Astrocyte of the cerebellum (primary cell): ENCODE measurements at regions of chr2 and their contacts with region 1.

Region 1: GRCh38 chr2:85750587-85751575 is 2.9 kb upstream of the ATOH8 start:
- DNase-seq: no peak
- H3K4me3 ChIP-seq: no peak overlapping the region
- CTCF ChIP-seq: peak; percentile 91

Region 2: GRCh38 chr2:85785027-85785822 is 34.3 kb after region 1 on chr2:
- in situ Hi-C with region 1: no loop called
- DNase-seq: peak; percentile 99
- H3K4me3 ChIP-seq: no peak overlapping the region
- CTCF ChIP-seq: no peak

Region 3: DNA sequence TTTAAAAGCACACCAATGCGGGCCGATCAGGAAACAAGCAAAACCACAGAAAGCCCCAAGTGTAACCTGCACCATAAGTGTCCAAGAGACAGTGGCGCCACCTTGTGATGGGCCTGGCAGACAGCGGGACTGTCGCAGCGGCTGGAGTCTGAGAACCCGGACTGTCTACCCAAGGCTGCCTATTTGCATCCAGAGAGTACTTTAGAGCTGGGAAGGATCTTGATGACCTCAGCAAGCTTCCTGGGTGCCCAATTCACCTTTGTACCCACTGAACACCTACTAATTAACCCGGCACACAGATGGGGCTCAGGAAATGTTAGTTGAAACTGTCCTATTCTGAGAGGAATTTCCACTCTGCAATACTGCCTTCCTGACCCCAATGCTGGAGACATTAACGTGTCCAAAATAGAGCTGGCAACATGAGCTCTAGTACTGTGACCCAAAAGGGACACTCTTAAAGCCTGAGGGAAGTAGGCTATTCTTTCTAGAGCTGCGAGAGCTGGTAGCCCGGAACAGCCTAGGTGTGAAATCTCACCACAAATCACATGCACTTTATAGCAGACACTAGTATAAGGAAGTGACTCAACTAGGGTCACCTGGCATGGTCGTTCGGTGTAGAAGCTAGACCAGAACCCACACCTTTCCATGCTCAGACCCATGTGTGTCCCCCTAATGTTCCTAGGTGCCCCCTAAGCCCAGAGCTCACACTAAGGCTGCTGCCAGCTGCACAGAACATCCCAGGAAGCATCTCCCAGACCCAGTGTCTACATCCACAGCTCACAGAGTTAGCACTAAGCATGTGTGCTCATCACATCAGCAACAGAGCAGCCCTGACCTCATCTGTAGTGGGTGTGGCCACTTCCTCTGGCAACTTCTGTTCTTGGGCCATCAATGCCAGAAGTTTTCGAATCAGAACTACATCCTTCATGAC is 329.4 kb after region 1 on chr2:
- in situ Hi-C with region 1: loop called (anchors 5 kb)
- DNase-seq: no peak
- H3K4me3 ChIP-seq: no peak overlapping the region
- CTCF ChIP-seq: peak; percentile 84